ENCODE measurements at regions of chr7 and their contacts with region 1.

Region 1: DNA sequence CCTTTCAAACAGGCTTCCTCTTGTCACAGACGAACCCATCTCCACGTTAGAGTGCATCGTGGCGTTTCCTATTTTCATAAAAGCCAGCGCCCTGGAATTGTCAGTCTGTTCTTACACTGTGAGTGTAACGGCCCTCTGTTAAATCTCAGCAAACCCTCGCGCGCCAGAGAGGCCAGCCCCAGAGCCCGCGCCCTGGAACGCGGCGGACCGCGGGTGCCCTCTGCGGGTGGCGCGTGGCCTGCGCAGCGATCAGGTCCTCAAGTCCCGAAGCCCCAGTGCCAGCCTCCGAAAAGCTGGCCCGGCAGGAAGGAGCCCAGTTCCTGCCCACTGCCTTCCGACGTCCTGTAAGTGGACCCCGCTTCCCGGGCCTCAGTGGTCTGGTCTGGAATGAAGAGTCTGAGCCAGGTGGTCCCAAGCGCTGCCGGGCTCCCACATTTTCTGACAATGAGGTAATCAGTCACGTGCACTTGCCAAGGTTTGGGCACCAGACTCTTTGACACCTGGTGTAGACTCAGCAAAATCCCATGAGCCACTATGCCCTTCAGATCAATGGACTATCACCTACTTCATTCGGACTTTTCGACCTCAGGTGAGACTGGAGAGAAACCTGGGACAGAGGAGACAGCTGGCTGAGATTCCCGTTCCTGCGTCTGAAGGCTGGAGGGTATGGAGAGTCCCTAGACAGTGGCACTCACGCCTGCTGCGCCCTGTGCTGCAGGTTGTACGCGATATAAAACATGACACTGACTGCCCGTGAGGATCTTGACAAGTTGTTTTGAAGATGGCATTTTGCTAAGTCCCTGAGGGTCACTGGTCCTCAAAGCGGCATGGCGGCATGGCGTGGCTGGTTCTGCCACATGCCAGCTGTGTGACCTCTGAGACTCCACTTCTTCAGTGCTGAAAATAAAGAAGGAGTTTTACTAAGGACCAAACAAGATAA is 109.4 kb upstream of the LANCL2 start:
- DNase-seq: peak; percentile 90
- H3K4me3 ChIP-seq: peak overlapping the region; percentile 43 to 78 (median 51)
- H3K27ac ChIP-seq: peak overlapping the region in 1 of 8 donors; percentile 16
- H3K4me1 ChIP-seq: peaks cover 7 to 20% (median 17%) of the 10 kb centered on the region in 6 donors
- H3K27me3 ChIP-seq: peaks cover 0 to 76% (median 30%) of the 10 kb centered on the region in 7 donors
- CTCF ChIP-seq: peak; percentile 47 to 85 (median 76)
- POLR2A ChIP-seq: no peak

Region 2: DNA sequence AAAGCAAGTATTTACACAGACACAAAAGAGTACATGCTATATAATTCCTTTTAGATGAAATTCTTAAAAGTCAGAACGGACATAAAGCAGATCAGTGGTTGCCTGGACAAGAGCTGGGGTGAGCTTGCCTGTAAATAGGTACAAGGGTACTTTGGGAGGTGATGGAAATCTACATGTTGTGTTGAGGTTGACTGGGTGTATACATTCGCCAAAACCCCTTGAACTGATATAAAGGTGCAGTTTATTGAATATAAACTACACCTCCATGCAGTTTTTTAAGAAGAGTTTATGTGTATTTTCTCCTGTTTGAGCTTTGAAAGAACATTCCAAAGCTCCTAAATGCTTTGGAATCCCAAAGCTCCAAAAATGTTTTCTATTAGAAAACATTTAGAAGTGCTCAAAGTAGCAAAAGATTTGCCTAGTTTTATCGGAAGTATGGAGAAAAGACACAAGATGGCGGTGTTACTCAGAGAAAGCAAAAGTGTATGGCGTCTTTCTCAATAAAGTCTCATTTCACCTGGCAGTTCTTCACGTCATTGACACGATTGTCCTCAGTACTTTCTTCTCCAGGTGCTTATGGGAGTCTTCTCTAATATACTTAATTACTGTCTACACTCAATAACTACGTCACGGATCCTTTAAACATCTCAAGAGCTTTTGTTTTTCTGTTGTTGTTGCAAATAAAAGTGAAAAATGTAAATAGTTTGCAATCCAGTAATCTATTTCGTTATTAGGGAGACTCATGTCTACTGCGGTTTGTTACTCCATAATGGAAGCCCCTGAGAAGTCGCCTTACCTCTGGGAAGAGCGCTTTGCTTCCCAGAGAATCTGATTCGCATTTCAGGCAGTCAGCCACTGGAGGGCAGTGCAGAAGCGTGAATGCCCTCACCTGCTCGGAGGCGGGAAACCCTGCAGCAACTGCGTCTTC is 482.0 kb before region 1 on chr7:
- intact Hi-C with region 1: loop called (anchors 5 kb)
- DNase-seq: peak; percentile 86
- H3K4me3 ChIP-seq: peak overlapping the region in 6 of 8 donors; percentile 7 to 61 (median 28)
- H3K27ac ChIP-seq: peak overlapping the region in 3 of 8 donors; percentile 4 to 12 (median 6)
- H3K4me1 ChIP-seq: peaks cover 0 to 11% (median 3%) of the 10 kb centered on the region in 6 donors
- H3K27me3 ChIP-seq: peaks cover 0 to 36% (median 0%) of the 10 kb centered on the region in 7 donors
- CTCF ChIP-seq: peak in 10 of 11 experiments; percentile 51 to 91 (median 80)
- POLR2A ChIP-seq: no peak

Region 3: DNA sequence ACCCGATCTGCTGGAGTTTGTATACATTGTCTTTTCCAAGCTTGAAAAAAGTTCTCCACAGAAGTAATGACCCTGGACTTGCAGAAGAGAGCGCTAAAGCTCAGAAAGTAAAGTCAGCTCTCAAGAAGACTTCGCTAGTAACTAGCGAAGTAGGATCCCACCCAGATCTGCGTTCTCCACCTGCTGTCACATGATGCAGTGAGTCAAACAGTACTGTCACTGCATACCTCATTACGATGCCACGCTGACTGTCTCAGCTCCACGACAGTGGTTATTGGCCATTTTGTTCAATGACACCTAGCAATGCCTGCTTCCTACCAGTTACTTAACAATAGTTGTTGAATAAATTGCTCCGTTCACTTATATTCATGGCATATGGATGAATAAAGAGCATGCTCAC is 467.1 kb before region 1 on chr7:
- intact Hi-C with region 1: loop called (anchors 5 kb)
- DNase-seq: no peak
- H3K4me3 ChIP-seq: peak overlapping the region in 1 of 8 donors; percentile 3
- H3K27ac ChIP-seq: no peak overlapping the region
- H3K4me1 ChIP-seq: peaks cover 0 to 8% (median 6%) of the 10 kb centered on the region in 6 donors
- H3K27me3 ChIP-seq: peaks cover 0 to 38% (median 0%) of the 10 kb centered on the region in 7 donors
- CTCF ChIP-seq: peak in 9 of 11 experiments; percentile 15 to 64 (median 44)
- POLR2A ChIP-seq: no peak

Region 4: GRCh38 chr7:54839538-54840213 is 416.1 kb before region 1 on chr7:
- intact Hi-C with region 1: loop called (anchors 10 kb)
- DNase-seq: peak; percentile 80
- H3K4me3 ChIP-seq: no peak overlapping the region
- H3K27ac ChIP-seq: no peak overlapping the region
- H3K4me1 ChIP-seq: peaks cover 0 to 19% (median 0%) of the 10 kb centered on the region in 6 donors
- H3K27me3 ChIP-seq: no peaks in the 10 kb centered on the region
- CTCF ChIP-seq: peak; percentile 11 to 72 (median 61)
- POLR2A ChIP-seq: no peak

Region 5: GRCh38 chr7:55572378-55573233 is 316.8 kb after region 1 on chr7 and contains the start of gene VOPP1:
- intact Hi-C with region 1: no loop called
- DNase-seq: peak; percentile 94
- H3K4me3 ChIP-seq: peak within 1 kb of the TSS; percentile 83 to 99 (median 98)
- H3K27ac ChIP-seq: peak within 1 kb of the TSS; percentile 77 to 97 (median 92)
- H3K4me1 ChIP-seq: peaks cover 49 to 62% (median 57%) of the 10 kb centered on the region in 6 donors
- H3K27me3 ChIP-seq: no peaks in the 10 kb centered on the region
- CTCF ChIP-seq: no peak
- POLR2A ChIP-seq: no peak
- total RNA-seq, gene VOPP1: 130 to 168 (median 148) TPM